Common myeloid progenitor, CD34-positive (primary cell): ENCODE measurements at regions of chr7 and their contacts with region 1.

Region 1: GRCh38 chr7:87416682-87417587 is 58.5 kb downstream of the ABCB4 start:
- DNase-seq: peak; percentile 62 to 80 (median 69)
- H3K4me3 ChIP-seq: no peak overlapping the region
- H3K27ac ChIP-seq: no peak overlapping the region
- H3K4me1 ChIP-seq: no peaks in the 10 kb centered on the region
- H3K27me3 ChIP-seq: peaks cover 0 to 1% (median 0%) of the 10 kb centered on the region in 5 experiments

Region 2: DNA sequence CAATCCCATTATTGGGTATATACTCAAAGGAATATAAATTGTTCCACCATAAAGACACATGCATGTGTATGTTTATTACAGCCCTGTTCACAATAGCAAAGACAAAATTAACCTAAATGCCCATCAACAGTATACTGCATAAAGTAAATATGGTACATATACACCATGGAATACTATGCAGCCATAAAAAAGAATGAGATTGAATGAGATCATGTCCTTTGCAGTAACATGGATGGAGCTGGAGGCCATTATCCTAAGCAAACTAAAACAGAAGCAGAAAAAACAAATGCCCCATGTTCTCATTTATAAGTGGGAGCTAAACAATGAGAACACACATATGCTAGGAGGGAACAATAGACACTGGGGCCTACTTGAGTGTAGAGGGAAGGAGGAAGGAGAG is 116.2 kb before region 1 on chr7:
- CTCF ChIA-PET with region 1: interaction called, 13 read pairs
- POLR2A ChIA-PET with region 1: no interaction called
- DNase-seq: no peak
- H3K4me3 ChIP-seq: no peak overlapping the region
- H3K27ac ChIP-seq: no peak overlapping the region
- H3K4me1 ChIP-seq: no peaks in the 10 kb centered on the region
- H3K27me3 ChIP-seq: no peaks in the 10 kb centered on the region

Region 3: GRCh38 chr7:87312215-87312865 is 104.6 kb before region 1 on chr7:
- CTCF ChIA-PET with region 1: interaction called, 157 read pairs
- POLR2A ChIA-PET with region 1: no interaction called
- DNase-seq: peak; percentile 50 to 77 (median 71)
- H3K4me3 ChIP-seq: no peak overlapping the region
- H3K27ac ChIP-seq: no peak overlapping the region
- H3K4me1 ChIP-seq: peaks cover 0 to 2% (median 0%) of the 10 kb centered on the region in 4 experiments
- H3K27me3 ChIP-seq: no peaks in the 10 kb centered on the region

Region 4: DNA sequence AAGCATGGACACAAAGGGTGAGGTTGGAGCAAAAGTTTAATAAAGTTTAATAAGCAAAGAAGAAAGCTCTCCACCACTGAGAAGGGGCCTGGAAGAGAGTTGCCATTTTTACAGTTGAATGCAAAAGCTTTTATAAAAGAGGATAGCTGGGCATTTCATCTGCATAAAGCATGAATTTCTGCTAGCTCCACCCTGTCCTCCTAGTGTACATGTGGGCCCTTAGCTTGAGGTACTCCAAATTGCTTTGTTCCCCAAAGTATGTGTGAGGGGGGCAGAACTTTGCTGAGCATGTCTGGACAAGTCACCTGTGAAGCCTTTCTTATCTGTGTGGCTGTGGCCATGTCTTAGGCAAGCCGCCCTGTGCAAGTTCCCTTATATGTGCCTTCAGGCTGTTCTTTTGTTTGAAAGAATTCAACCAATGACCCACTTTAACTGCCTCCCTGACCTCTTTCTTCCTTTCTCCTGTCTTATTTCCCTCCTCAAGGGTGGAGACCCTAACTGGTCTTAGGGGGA is 94.0 kb before region 1 on chr7:
- CTCF ChIA-PET with region 1: interaction called, 157 read pairs
- POLR2A ChIA-PET with region 1: no interaction called
- DNase-seq: no peak
- H3K4me3 ChIP-seq: no peak overlapping the region
- H3K27ac ChIP-seq: no peak overlapping the region
- H3K4me1 ChIP-seq: no peaks in the 10 kb centered on the region
- H3K27me3 ChIP-seq: no peaks in the 10 kb centered on the region